ENCODE measurements at regions of chr14 and their contacts with region 1.

Region 1: GRCh38 chr14:42224053-42224888 is 617.6 kb downstream of the LRFN5 start:
- DNase-seq: peak; percentile 90
- ATAC-seq: peak; percentile 57
- H3K4me3 ChIP-seq: no peak overlapping the region
- H3K27ac ChIP-seq: peak overlapping the region; percentile 38
- H3K4me1 ChIP-seq: peaks cover 26% of the 10 kb centered on the region
- H3K27me3 ChIP-seq: no peaks in the 10 kb centered on the region
- CTCF ChIP-seq: peak; percentile 96

Region 2: GRCh38 chr14:41925409-41925808 is 298.9 kb before region 1 on chr14:
- CTCF ChIA-PET with region 1: no interaction called
- POLR2A ChIA-PET with region 1: no interaction called
- intact Hi-C with region 1: loop called (anchors 2 kb)
- DNase-seq: peak; percentile 63
- ATAC-seq: peak; percentile 97
- H3K4me3 ChIP-seq: no peak overlapping the region
- H3K27ac ChIP-seq: no peak overlapping the region
- H3K4me1 ChIP-seq: no peaks in the 10 kb centered on the region
- H3K27me3 ChIP-seq: no peaks in the 10 kb centered on the region
- CTCF ChIP-seq: peak; percentile 73

Region 3: GRCh38 chr14:42095155-42095554 is 129.1 kb before region 1 on chr14:
- CTCF ChIA-PET with region 1: no interaction called
- POLR2A ChIA-PET with region 1: no interaction called
- intact Hi-C with region 1: no loop called
- DNase-seq: peak; percentile 54
- ATAC-seq: peak; percentile 75
- H3K4me3 ChIP-seq: no peak overlapping the region
- H3K27ac ChIP-seq: no peak overlapping the region
- H3K4me1 ChIP-seq: peaks cover 8% of the 10 kb centered on the region
- H3K27me3 ChIP-seq: no peaks in the 10 kb centered on the region
- CTCF ChIP-seq: no peak

Region 4: DNA sequence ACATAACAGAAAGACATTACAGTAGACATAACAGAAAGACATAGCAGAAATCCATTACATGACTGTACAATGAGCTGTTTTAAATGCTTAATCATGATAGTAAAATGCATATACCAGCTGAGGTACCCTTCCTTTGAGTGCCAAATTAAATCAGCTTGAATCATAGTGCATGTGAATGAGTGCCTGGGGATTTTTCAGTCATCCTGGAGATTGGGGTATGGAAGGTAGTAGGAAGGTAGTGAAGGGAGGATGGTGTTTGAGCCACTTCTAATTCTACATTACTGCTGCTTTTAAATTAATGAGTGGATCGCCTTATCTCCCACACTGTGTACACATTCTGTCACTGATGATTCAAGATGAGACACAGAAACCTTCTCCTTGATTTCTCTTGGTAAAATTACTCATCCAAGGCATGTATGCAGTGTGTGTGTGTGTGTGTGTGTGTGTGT is 83.4 kb before region 1 on chr14:
- CTCF ChIA-PET with region 1: interaction called, 3 read pairs
- POLR2A ChIA-PET with region 1: no interaction called
- intact Hi-C with region 1: loop called (anchors 1 kb)
- DNase-seq: peak; percentile 90
- ATAC-seq: peak; percentile 93
- H3K4me3 ChIP-seq: peak overlapping the region; percentile 1; the same call in 1 of the 2 replicates
- H3K27ac ChIP-seq: peak overlapping the region; percentile 89
- H3K4me1 ChIP-seq: peaks cover 28% of the 10 kb centered on the region
- H3K27me3 ChIP-seq: no peaks in the 10 kb centered on the region
- CTCF ChIP-seq: no peak

Region 5: GRCh38 chr14:42200947-42201346 is 23.3 kb before region 1 on chr14:
- CTCF ChIA-PET with region 1: no interaction called
- POLR2A ChIA-PET with region 1: no interaction called
- intact Hi-C with region 1: no loop called
- DNase-seq: no peak
- ATAC-seq: no peak
- H3K4me3 ChIP-seq: no peak overlapping the region
- H3K27ac ChIP-seq: no peak overlapping the region
- H3K4me1 ChIP-seq: no peaks in the 10 kb centered on the region
- H3K27me3 ChIP-seq: no peaks in the 10 kb centered on the region
- CTCF ChIP-seq: no peak

Region 6: DNA sequence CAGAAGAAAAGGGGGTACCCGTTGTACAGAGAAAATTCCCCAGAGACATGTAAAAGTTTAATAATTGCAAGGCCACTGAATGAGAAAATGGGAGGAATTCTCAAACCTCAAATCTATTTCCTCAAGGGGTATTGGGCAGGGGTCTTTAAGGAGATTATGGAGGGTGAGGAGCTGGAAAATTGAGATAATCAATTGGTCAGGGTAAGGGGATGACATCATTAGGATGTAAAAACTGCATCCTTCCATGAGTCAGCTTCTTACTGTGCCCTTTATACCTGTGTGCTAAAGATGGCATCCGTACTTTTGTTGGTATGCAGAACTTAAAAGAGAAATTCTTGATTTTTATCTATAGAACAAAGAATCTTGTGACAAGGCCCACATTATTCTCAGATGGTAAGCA is 23.9 kb after region 1 on chr14:
- CTCF ChIA-PET with region 1: no interaction called
- POLR2A ChIA-PET with region 1: no interaction called
- intact Hi-C with region 1: no loop called
- DNase-seq: no peak
- ATAC-seq: no peak
- H3K4me3 ChIP-seq: no peak overlapping the region
- H3K27ac ChIP-seq: no peak overlapping the region
- H3K4me1 ChIP-seq: no peaks in the 10 kb centered on the region
- H3K27me3 ChIP-seq: no peaks in the 10 kb centered on the region
- CTCF ChIP-seq: no peak

Region 7: GRCh38 chr14:42814817-42815216 is 590.5 kb after region 1 on chr14:
- CTCF ChIA-PET with region 1: no interaction called
- POLR2A ChIA-PET with region 1: no interaction called
- intact Hi-C with region 1: loop called (anchors 2 kb)
- DNase-seq: no peak
- ATAC-seq: no peak
- H3K4me3 ChIP-seq: no peak overlapping the region
- H3K27ac ChIP-seq: peak overlapping the region; percentile 30; the same call in 1 of the 2 replicates
- H3K4me1 ChIP-seq: peaks cover 9% of the 10 kb centered on the region
- H3K27me3 ChIP-seq: no peaks in the 10 kb centered on the region
- CTCF ChIP-seq: no peak

Region 8: GRCh38 chr14:43005807-43006206 is 781.5 kb after region 1 on chr14:
- CTCF ChIA-PET with region 1: no interaction called
- POLR2A ChIA-PET with region 1: no interaction called
- intact Hi-C with region 1: loop called (anchors 1 kb)
- DNase-seq: peak; percentile 48
- ATAC-seq: peak; percentile 48; the same call in 1 of the 2 replicates
- H3K4me3 ChIP-seq: no peak overlapping the region
- H3K27ac ChIP-seq: no peak overlapping the region
- H3K4me1 ChIP-seq: no peaks in the 10 kb centered on the region
- H3K27me3 ChIP-seq: no peaks in the 10 kb centered on the region
- CTCF ChIP-seq: peak; percentile 50

Measured in PC-3 (cell line).